Activated CD8-positive, alpha-beta memory T cell treated with anti-CD3 and anti-CD28 coated beads, Interleukin-2, amount 10 ng/mL, durations not matched to agents 7 days and 5 days (primary cell): ENCODE measurements at regions of chr9 and their contacts with region 1.

Region 1: GRCh38 chr9:137095664-137096517 is 9.1 kb downstream of the MAN1B1 start:
- DNase-seq: peak; percentile 95
- ATAC-seq: peak; percentile 98
- H3K4me3 Mint-ChIP-seq: peak overlapping the region; percentile 85
- H3K27ac Mint-ChIP-seq: peak overlapping the region; percentile 97
- H3K4me1 Mint-ChIP-seq: peaks cover 30% of the 10 kb centered on the region
- H3K27me3 Mint-ChIP-seq: no peaks in the 10 kb centered on the region

Region 2: GRCh38 chr9:136991993-136992818 is 103.7 kb before region 1 on chr9 and contains the start of gene PAXX:
- CTCF ChIA-PET with region 1: no interaction called
- DNase-seq: peak; percentile 96
- ATAC-seq: peak; percentile 88
- H3K4me3 Mint-ChIP-seq: peak within 1 kb of the TSS; percentile 84
- H3K27ac Mint-ChIP-seq: peak within 1 kb of the TSS; percentile 82
- H3K4me1 Mint-ChIP-seq: peaks cover 32% of the 10 kb centered on the region
- H3K27me3 Mint-ChIP-seq: peaks cover 9% of the 10 kb centered on the region
- total RNA-seq, gene PAXX: 68.6 to 94.8 TPM

Region 3: GRCh38 chr9:137114610-137115391 is 18.9 kb after region 1 on chr9 and contains the start of gene DPP7:
- CTCF ChIA-PET with region 1: interaction called, 23 read pairs
- DNase-seq: peak; percentile 85
- ATAC-seq: peak; percentile 96
- H3K4me3 Mint-ChIP-seq: peak within 1 kb of the TSS; percentile 66
- H3K27ac Mint-ChIP-seq: peak within 1 kb of the TSS; percentile 52
- H3K4me1 Mint-ChIP-seq: peaks cover 10% of the 10 kb centered on the region
- H3K27me3 Mint-ChIP-seq: no peaks in the 10 kb centered on the region
- total RNA-seq, gene DPP7: 271 to 321 TPM

Region 4: DNA sequence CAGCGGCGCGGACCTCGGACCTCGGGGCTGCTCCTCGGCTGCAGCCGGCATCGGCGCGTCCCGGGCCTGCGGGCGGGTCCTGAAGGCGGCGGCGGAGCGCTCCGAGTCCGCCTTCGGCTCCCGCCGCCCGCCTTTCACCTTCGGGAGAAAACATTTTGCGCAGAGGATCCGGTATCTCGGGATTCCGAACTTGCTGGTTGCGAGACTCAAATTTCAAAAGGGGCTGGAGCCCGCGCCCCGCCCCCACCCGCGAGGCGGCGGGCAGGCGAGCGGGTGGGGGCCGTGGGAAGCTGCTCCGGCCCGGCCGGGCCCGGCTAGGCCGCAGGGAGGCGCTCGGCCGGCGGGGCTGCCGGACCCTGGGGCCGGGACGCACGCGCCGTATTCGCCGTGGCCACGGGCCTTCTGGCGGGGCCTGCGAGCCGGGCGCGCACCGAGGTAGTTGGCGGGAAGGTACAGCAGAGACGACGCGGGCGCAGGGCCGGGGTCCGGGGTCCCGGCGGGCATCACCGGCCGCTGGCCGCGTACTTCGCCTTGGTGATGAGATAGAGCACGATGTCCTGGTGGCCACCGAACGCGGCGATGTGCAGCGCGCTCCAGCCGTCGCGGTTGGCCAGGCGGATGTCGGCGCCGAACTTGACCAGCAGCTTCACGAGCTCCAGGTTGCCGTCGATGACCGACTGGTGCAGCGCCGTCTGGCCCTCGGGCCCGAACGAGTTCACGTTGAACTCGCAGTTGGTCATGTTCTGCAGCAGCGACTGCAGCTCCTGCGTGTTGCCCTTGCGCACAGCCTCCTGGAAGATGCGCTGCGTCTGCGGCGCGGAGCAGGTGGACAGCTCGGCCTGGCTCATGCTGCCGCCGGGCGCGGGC is 205.4 kb after region 1 on chr9:
- CTCF ChIA-PET with region 1: no interaction called
- DNase-seq: no peak
- ATAC-seq: peak; percentile 20
- H3K4me3 Mint-ChIP-seq: peak overlapping the region; percentile 70
- H3K27ac Mint-ChIP-seq: no peak overlapping the region
- H3K4me1 Mint-ChIP-seq: peaks cover 17% of the 10 kb centered on the region
- H3K27me3 Mint-ChIP-seq: peaks cover 38% of the 10 kb centered on the region